HepG2 (cell line): ENCODE measurements at regions of chr7 and their contacts with region 1.

Region 1: DNA sequence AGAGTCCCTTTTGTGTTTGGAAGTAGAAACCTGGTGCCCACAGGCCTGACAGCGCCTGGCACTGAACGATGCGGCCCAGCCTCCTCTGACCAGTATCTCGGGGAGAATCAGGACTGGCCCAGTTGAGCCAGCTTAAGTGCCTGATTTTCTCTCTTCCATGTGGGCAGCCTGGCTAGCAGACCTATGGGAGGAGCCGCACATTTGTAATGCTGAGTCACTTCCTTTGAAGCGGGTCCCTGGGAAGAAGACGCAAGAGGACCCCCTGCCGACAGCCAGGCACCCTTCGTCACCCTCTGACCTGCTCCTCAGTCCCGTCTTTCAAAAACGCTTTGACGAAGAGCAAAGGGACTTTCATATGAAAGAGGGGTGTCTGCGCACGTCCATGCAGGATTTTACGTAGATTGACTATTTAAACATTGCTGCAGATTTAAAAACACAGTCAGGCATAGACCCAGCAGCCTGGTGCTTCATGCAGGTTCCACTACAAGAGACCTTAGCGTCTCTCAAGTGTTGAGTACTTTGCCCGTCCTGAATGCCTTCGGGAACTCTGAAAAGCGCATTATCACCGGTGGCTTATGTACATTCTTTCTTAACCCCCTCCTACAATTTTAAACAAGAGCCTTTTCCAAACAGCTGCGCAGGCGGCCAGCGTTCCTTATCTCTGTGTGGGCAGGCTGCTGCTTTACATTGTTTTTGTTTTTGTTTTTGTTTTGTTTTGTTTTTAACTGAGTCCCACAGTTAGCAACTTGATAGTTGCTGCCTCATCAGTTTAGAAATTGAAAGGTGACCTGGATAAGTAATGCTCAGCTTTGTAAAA is 36.5 kb upstream of the AP5Z1 start:
- DNase-seq: peak; percentile 77
- ATAC-seq: peak; percentile 54
- H3K4me3 ChIP-seq: peak overlapping the region; percentile 27 to 56 (median 36); a peak in 5 of 6 replicates
- H3K27ac ChIP-seq: peak overlapping the region; percentile 83
- H3K4me1 ChIP-seq: peaks cover 64% of the 10 kb centered on the region
- H3K27me3 ChIP-seq: no peaks in the 10 kb centered on the region
- CTCF ChIP-seq: peak; percentile 54
- EP300 ChIP-seq: 0 out of 4 replicates have a peak, but pooled peaks of 1 of the 2 experiments have one; percentile 8
- POLR2A ChIP-seq: peak in 1 of 2 experiments; percentile 20; a peak in 1 of 4 replicates
- RAD21 ChIP-seq: no peak

Region 2: GRCh38 chr7:4712281-4713182 is 26.4 kb before region 1 on chr7:
- CTCF ChIA-PET with region 1: no interaction called
- POLR2A ChIA-PET with region 1: interaction called, 3 read pairs
- in situ Hi-C with region 1: no loop called
- intact Hi-C with region 1: loop called (anchors 2 kb)
- DNase-seq: peak; percentile 76
- ATAC-seq: peak; percentile 89
- H3K4me3 ChIP-seq: peak overlapping the region in 1 of 3 experiments; percentile 18; a peak in 2 of 6 replicates
- H3K27ac ChIP-seq: peak overlapping the region; percentile 42
- H3K4me1 ChIP-seq: peaks cover 66% of the 10 kb centered on the region
- H3K27me3 ChIP-seq: no peaks in the 10 kb centered on the region
- CTCF ChIP-seq: no peak
- EP300 ChIP-seq: 0 out of 4 replicates have a peak, but pooled peaks of 1 of the 2 experiments have one; percentile 15
- POLR2A ChIP-seq: no peak
- RAD21 ChIP-seq: no peak

Region 3: GRCh38 chr7:4725014-4725849 is 13.7 kb before region 1 on chr7:
- CTCF ChIA-PET with region 1: no interaction called
- POLR2A ChIA-PET with region 1: interaction called, 10 read pairs
- in situ Hi-C with region 1: no loop called
- intact Hi-C with region 1: no loop called
- DNase-seq: peak; percentile 74
- ATAC-seq: peak; percentile 84
- H3K4me3 ChIP-seq: peak overlapping the region; percentile 65 to 74 (median 71)
- H3K27ac ChIP-seq: peak overlapping the region; percentile 75
- H3K4me1 ChIP-seq: peaks cover 28% of the 10 kb centered on the region
- H3K27me3 ChIP-seq: no peaks in the 10 kb centered on the region
- CTCF ChIP-seq: peak; percentile 31; the same call in 1 of the 2 replicates
- EP300 ChIP-seq: no peak
- POLR2A ChIP-seq: peak in 1 of 2 experiments; percentile 61; a peak in 1 of 4 replicates
- RAD21 ChIP-seq: no peak